ENCODE measurements at regions of chr11 and their contacts with region 1.

Region 1: GRCh38 chr11:121321614-121322243 is 29.2 kb downstream of the SC5D start:
- DNase-seq: peak in 1 of 3 donors; percentile 56
- ATAC-seq: peak; percentile 88 to 94 (median 92)
- H3K4me3 ChIP-seq: no peak overlapping the region
- H3K27ac ChIP-seq: no peak overlapping the region
- H3K4me1 ChIP-seq: no peaks in the 10 kb centered on the region
- H3K27me3 ChIP-seq: no peaks in the 10 kb centered on the region
- CTCF ChIP-seq: peak; percentile 48 to 63 (median 53)
- POLR2A ChIP-seq: no peak

Region 2: DNA sequence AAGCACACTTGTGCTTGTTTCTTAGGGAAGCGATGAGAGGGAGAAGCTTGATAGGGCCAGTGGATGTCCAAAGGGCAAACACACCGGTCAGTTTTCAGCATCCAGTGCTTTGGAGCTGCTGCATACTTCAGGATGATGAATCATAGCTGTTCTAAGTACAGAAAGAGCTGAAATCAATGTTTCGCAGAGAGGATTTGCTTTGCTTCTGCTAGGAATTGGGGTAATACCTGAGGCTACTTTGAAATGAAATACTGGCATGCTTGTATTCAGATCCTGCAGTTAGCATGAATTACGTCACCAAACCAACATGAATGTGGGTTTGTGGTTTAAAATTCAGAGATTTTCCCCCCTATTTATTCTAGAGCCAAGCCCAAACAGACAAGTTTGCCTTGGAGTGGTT is 70.9 kb before region 1 on chr11:
- intact Hi-C with region 1: no loop called
- DNase-seq: no peak
- ATAC-seq: peak in 1 of 4 donors; percentile 78
- H3K4me3 ChIP-seq: no peak overlapping the region
- H3K27ac ChIP-seq: no peak overlapping the region
- H3K4me1 ChIP-seq: no peaks in the 10 kb centered on the region
- H3K27me3 ChIP-seq: no peaks in the 10 kb centered on the region
- CTCF ChIP-seq: no peak
- POLR2A ChIP-seq: no peak

Region 3: GRCh38 chr11:121446752-121447156 is 125.0 kb after region 1 on chr11:
- intact Hi-C with region 1: loop called in 1 of 2 experiments (anchors 10 kb)
- DNase-seq: no peak
- ATAC-seq: no peak
- H3K4me3 ChIP-seq: no peak overlapping the region
- H3K27ac ChIP-seq: no peak overlapping the region
- H3K4me1 ChIP-seq: peaks cover 0 to 42% (median 5%) of the 10 kb centered on the region in 4 donors
- H3K27me3 ChIP-seq: no peaks in the 10 kb centered on the region
- CTCF ChIP-seq: peak in 3 of 4 donors; percentile 21 to 31 (median 26)
- POLR2A ChIP-seq: no peak

Region 4: DNA sequence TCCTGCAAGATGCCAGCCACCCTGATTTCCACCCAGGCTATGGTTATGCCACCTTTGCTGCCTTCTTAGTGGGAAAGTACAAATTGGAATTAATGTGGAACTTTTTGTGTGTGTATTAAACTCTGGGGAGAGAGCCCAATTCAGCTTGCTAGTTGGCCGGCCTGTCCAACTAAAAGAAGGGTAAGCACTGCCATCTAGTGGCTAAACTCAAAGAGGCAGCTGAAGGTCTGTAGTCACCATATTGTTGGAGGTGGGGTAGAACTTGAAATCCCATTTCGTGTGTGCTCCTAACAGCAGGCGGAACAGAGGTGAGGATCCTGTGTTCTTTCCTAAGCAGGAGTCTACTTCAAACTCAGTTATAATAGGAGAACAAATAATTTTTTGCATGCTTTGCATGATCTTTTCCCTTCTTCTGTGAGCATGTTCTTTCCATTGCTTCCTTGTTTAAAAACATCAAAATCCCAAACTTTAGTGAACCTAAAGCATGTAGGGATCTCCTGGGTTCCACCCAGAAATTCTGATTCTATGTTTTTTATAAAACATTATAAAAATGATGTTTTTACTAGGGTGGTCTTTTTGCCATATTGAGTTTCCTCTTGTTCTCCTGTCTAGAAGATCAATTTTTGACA is 269.8 kb after region 1 on chr11:
- intact Hi-C with region 1: loop called in 1 of 2 experiments (anchors 10 kb)
- DNase-seq: peak in 1 of 3 donors; percentile 69
- ATAC-seq: peak; percentile 68 to 79 (median 71)
- H3K4me3 ChIP-seq: no peak overlapping the region
- H3K27ac ChIP-seq: peak overlapping the region in 1 of 3 donors; percentile 29
- H3K4me1 ChIP-seq: peaks cover 0 to 28% (median 6%) of the 10 kb centered on the region in 4 donors
- H3K27me3 ChIP-seq: no peaks in the 10 kb centered on the region
- CTCF ChIP-seq: peak; percentile 87 to 93 (median 91)
- POLR2A ChIP-seq: no peak